ENCODE measurements at regions of chr3 and their contacts with region 1.

Region 1: DNA sequence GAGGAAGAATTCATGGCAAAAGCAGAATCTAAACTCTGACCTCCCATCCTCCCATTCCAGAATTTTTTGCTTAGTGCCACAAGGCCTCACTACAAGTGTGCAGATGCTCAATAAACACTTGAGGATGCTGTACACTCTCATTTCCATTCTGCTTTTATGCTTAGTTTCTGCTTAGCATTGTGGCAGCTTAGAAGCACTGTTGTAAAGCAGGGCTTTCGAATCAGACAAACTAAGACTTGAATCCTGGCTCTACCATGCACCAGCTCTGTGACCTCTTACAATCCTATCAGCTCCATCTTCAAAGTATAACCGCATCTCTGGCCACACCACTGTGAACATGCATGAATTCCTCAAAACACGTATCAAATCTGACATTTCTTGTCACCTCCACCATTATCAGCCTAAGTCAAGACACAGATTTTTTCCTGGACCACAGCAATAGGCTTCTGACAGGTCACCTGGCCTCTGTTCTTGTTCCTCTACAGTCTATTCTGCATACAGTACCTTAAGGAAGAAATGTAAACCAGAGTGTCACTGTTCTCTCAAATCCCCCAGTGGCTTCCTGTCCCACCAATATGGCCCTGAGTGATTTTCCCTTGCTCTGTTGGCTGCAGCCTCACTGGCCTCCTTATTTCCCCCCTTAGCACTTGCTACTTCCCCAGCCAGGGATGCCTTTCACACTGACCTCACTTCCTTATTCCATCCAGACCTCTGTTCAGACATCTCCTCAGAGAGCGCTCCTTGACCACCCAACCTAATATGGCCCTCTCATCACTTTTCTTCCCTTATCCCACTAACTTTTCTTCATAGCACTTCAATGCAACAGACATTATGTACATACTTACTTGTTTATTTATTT is 8.1 kb upstream of the PHC3 start:
- DNase-seq: no peak
- H3K4me3 ChIP-seq: no peak overlapping the region
- H3K27ac ChIP-seq: no peak overlapping the region
- H3K4me1 ChIP-seq: no peaks in the 10 kb centered on the region
- H3K27me3 ChIP-seq: no peaks in the 10 kb centered on the region
- CTCF ChIP-seq: no peak

Region 2: GRCh38 chr3:170257145-170257544 is 67.5 kb after region 1 on chr3:
- CTCF ChIA-PET with region 1: no interaction called
- dilution Hi-C with region 1: no loop called
- in situ Hi-C with region 1: no loop called
- intact Hi-C with region 1: loop called (anchors 2 kb)
- DNase-seq: no peak
- H3K4me3 ChIP-seq: no peak overlapping the region
- H3K27ac ChIP-seq: no peak overlapping the region
- H3K4me1 ChIP-seq: peaks cover 13% of the 10 kb centered on the region
- H3K27me3 ChIP-seq: no peaks in the 10 kb centered on the region
- CTCF ChIP-seq: no peak

Region 3: GRCh38 chr3:170357176-170357919 is 167.7 kb after region 1 on chr3 and contains the start of gene SKIL:
- CTCF ChIA-PET with region 1: no interaction called
- dilution Hi-C with region 1: no loop called
- in situ Hi-C with region 1: no loop called
- intact Hi-C with region 1: loop called (anchors 5 kb)
- DNase-seq: peak; percentile 95
- H3K4me3 ChIP-seq: peak within 1 kb of the TSS; percentile 78 to 89 (median 86)
- H3K27ac ChIP-seq: peak within 1 kb of the TSS; percentile 77
- H3K4me1 ChIP-seq: peaks cover 21% of the 10 kb centered on the region
- H3K27me3 ChIP-seq: no peaks in the 10 kb centered on the region
- CTCF ChIP-seq: peak in 1 of 2 donors; percentile 37
- total RNA-seq, gene SKIL: 28.6 to 38.8 TPM

Measured in mammary epithelial cell (primary cell).